GM13976 (cell line): ENCODE measurements at regions of chr9 and their contacts with region 1.

Region 1: DNA sequence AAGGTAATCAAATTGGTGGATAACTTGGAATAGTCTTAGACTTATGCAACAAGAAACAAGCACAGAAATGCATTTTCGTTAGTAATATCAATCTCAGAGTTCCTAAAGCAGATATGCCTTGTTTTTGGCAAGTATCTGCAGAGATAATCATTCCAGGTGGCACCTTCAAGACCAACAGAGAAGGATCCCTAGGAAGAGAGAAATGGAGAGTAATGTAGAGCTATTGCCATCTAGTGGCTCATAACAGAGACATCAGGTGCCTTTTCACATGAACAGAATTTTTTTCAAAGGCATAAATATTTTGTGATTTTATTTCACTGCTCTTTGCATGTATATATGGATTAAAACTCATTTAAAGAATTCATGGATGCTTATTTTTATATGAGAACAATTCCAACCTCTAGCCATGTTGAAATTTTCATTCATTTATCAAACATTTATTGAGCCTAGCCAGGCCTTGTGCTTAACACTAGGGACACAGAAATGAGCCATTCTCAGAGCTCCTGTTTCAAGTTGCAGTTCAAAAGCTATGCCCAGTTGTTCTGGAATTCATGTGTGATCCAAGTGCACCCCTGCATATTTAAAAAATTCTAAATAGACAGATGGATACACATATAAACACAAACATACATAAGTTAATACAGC is 117.5 kb upstream of the OR13F1 start:
- DNase-seq: peak; percentile 32
- CTCF ChIP-seq: no peak

Region 2: DNA sequence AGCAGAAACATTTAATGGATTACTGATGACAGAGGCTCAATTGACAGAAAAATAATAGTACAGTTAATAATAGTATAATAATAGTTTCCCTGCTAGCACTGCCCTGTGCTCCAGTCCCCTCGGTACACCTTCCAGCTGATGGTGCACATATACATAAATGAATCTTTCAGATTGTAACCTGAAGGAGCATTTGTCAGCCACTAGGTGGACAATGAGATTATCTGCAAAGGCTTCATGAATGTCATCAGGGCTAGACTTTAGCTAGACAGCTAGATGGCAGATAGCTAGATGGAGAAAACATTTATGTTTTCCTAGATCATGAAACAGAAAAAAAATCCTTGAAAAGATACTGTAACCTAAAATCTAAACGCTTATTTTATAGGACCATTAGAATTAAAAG is 596.9 kb before region 1 on chr9:
- in situ Hi-C with region 1: loop called (anchors 25 kb)
- DNase-seq: no peak
- CTCF ChIP-seq: peak; percentile 24